Caco-2 (cell line): ENCODE measurements at regions of chr4 and their contacts with region 1.

Region 1: GRCh38 chr4:147096667-147097604 is 151.3 kb upstream of the TTC29 start:
- DNase-seq: peak in 1 of 2 experiments; percentile 15
- H3K4me3 ChIP-seq: no peak overlapping the region
- H3K4me3 Mint-ChIP-seq: no peak overlapping the region
- H3K27ac Mint-ChIP-seq: no peak overlapping the region
- H3K4me1 ChIP-seq: peaks cover 4% of the 10 kb centered on the region; the same call in 1 of the 2 replicates
- H3K4me1 Mint-ChIP-seq: no peaks in the 10 kb centered on the region
- H3K27me3 ChIP-seq: no peaks in the 10 kb centered on the region
- H3K27me3 Mint-ChIP-seq: peaks cover 3% of the 10 kb centered on the region
- CTCF ChIP-seq: peak; percentile 34 to 43

Region 2: DNA sequence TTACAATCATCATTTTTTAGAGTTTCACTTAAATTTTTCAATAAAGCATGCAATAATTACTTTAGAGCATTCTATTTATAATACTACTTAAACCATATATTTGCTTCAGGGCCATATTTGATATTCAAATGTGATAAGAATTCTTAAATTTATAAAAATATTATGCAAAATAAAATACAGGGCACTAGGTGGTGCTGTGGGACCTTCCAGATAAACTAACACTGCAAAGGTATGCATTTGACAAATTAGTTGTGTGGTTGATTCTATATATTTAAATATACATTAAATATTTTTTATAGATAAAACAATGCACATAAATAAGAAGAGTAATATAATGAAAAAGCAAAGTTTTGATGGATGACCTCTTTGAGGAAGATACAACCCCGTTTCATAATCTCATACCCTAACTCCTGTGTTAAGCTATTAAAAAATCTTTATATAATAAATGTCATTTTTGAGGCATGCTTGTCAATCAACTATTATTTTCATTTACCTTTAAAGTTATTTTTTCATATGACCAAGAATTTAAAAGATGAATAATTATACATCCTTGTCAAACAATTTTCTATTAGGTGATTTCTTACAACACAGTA is 754.2 kb before region 1 on chr4:
- CTCF ChIA-PET with region 1: no interaction called
- POLR2A ChIA-PET with region 1: no interaction called
- intact Hi-C with region 1: loop called (anchors 2 kb)
- DNase-seq: peak in 1 of 2 experiments; percentile 39
- H3K4me3 ChIP-seq: no peak overlapping the region
- H3K4me3 Mint-ChIP-seq: no peak overlapping the region
- H3K27ac Mint-ChIP-seq: no peak overlapping the region
- H3K4me1 ChIP-seq: no peaks in the 10 kb centered on the region
- H3K4me1 Mint-ChIP-seq: no peaks in the 10 kb centered on the region
- H3K27me3 ChIP-seq: no peaks in the 10 kb centered on the region
- H3K27me3 Mint-ChIP-seq: no peaks in the 10 kb centered on the region
- CTCF ChIP-seq: peak; percentile 37 to 45

Region 3: DNA sequence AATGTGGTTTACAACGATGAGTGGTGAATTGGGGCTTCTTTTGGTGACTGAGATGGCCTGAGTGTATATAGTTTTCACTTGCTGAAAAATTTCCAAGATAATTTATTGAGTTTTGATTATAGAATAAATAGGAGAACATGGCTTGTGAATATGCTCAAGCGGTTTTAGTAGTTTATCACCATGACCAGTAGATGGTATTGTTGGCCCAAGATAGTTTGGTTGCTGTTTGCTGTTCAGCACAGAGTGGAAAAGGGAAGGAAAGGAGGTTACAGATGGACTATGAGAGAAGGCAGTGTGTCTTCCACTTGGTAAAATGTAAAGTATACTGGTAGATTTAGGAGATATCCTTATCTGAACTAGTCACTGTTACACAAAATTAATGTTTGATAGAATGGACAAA is 514.1 kb before region 1 on chr4:
- CTCF ChIA-PET with region 1: no interaction called
- POLR2A ChIA-PET with region 1: no interaction called
- intact Hi-C with region 1: loop called (anchors 5 kb)
- DNase-seq: no peak
- H3K4me3 ChIP-seq: no peak overlapping the region
- H3K4me3 Mint-ChIP-seq: no peak overlapping the region
- H3K27ac Mint-ChIP-seq: no peak overlapping the region
- H3K4me1 ChIP-seq: no peaks in the 10 kb centered on the region
- H3K4me1 Mint-ChIP-seq: no peaks in the 10 kb centered on the region
- H3K27me3 ChIP-seq: no peaks in the 10 kb centered on the region
- H3K27me3 Mint-ChIP-seq: peaks cover 2% of the 10 kb centered on the region
- CTCF ChIP-seq: no peak

Region 4: DNA sequence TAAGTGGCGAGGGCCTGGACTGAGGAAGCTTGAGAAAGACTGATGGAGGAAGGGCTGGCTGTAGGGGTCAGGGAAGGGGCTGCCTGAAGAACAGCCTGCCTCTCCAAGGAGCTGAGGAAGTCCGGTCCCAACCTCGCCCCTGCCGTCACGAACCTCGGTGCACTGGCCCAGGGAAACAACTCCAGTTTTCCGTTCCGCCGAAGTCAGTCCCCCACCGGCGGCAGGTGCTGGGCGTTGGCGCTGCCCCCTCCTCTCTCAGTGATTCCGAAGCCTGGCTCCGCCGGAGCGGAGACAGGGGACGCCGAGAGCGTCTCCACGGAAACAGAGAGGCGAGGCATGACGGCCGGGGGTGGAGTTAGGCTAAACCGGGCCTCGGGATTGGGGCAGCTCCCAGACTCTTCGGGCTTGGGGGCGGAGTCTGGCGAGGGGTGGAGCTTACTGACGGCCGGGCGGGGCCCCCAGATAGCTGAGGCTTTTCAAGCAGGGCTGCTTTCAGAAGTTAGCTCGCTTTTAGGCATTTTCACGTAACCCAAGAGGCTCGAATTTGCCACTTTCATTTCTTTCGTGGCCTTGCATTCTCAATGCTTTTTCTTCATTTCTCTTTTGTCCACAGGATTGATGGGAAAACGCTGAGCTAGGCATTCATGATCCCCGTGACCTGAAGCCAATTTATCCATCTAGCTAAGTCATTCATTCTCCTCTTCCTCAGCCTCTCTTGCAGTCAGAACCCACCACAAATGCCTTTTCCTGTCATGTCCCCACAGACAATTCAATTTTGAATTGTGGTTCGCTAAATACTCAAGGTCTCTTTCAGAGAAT is 151.2 kb before region 1 on chr4 and contains the start of gene TTC29:
- CTCF ChIA-PET with region 1: no interaction called
- POLR2A ChIA-PET with region 1: no interaction called
- intact Hi-C with region 1: loop called (anchors 10 kb)
- DNase-seq: peak; percentile 82
- H3K4me3 ChIP-seq: peak within 1 kb of the TSS; percentile 25
- H3K4me3 Mint-ChIP-seq: peak within 1 kb of the TSS; percentile 61
- H3K27ac Mint-ChIP-seq: no peak within 1 kb of the TSS
- H3K4me1 ChIP-seq: no peaks in the 10 kb centered on the region
- H3K4me1 Mint-ChIP-seq: peaks cover 8% of the 10 kb centered on the region
- H3K27me3 ChIP-seq: no peaks in the 10 kb centered on the region
- H3K27me3 Mint-ChIP-seq: peaks cover 18% of the 10 kb centered on the region
- CTCF ChIP-seq: no peak
- total RNA-seq, gene TTC29: not detected in 2 replicates

Region 5: GRCh38 chr4:147019061-147019460 is 77.9 kb before region 1 on chr4:
- CTCF ChIA-PET with region 1: interaction called, 73 read pairs
- POLR2A ChIA-PET with region 1: no interaction called
- intact Hi-C with region 1: loop called (anchors 1 kb)
- DNase-seq: peak; percentile 70 to 74
- H3K4me3 ChIP-seq: no peak overlapping the region
- H3K4me3 Mint-ChIP-seq: no peak overlapping the region
- H3K27ac Mint-ChIP-seq: no peak overlapping the region
- H3K4me1 ChIP-seq: no peaks in the 10 kb centered on the region
- H3K4me1 Mint-ChIP-seq: no peaks in the 10 kb centered on the region
- H3K27me3 ChIP-seq: no peaks in the 10 kb centered on the region
- H3K27me3 Mint-ChIP-seq: peaks cover 21% of the 10 kb centered on the region
- CTCF ChIP-seq: peak; percentile 76 to 77

Region 6: GRCh38 chr4:147118528-147118927 is 21.6 kb after region 1 on chr4:
- CTCF ChIA-PET with region 1: no interaction called
- POLR2A ChIA-PET with region 1: no interaction called
- intact Hi-C with region 1: no loop called
- DNase-seq: no peak
- H3K4me3 ChIP-seq: no peak overlapping the region
- H3K4me3 Mint-ChIP-seq: no peak overlapping the region
- H3K27ac Mint-ChIP-seq: no peak overlapping the region
- H3K4me1 ChIP-seq: no peaks in the 10 kb centered on the region
- H3K4me1 Mint-ChIP-seq: no peaks in the 10 kb centered on the region
- H3K27me3 ChIP-seq: no peaks in the 10 kb centered on the region
- H3K27me3 Mint-ChIP-seq: no peaks in the 10 kb centered on the region
- CTCF ChIP-seq: no peak

Region 7: GRCh38 chr4:147220833-147221232 is 123.9 kb after region 1 on chr4:
- CTCF ChIA-PET with region 1: no interaction called
- POLR2A ChIA-PET with region 1: no interaction called
- intact Hi-C with region 1: no loop called
- DNase-seq: no peak
- H3K4me3 ChIP-seq: no peak overlapping the region
- H3K4me3 Mint-ChIP-seq: no peak overlapping the region
- H3K27ac Mint-ChIP-seq: no peak overlapping the region
- H3K4me1 ChIP-seq: no peaks in the 10 kb centered on the region
- H3K4me1 Mint-ChIP-seq: peaks cover 5% of the 10 kb centered on the region
- H3K27me3 ChIP-seq: no peaks in the 10 kb centered on the region
- H3K27me3 Mint-ChIP-seq: no peaks in the 10 kb centered on the region
- CTCF ChIP-seq: no peak

Region 8: DNA sequence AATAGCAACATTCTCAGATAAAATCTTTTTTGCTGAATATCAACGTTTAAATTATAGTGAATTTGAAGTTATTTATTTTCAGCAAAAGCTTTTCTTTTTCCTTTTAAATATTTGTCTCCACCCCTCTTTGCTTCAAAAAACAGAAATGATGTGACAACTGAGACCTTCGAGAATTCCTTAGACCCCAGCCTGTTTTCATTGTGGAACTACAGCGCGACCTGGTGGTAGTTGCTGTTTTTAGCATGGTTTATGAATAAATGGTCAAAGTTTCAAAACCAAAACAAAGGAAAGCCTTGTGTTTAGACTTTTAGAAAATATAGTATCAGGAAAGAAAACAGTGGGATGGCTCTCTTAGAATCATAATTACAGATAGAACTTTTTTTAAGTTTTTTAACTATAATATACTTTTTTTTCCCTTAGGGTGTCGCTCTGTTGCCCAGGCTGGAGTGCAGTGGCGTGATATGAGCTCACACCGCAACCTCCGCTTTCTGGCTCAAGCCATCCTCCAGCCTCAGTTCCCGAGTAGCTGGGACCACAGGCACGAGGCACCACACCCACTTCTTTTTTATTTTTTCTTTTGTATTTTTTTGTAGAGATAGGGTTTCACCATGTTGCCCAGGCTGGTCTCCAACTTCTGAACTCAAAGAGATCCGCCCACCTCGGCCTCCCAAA is 493.4 kb after region 1 on chr4:
- CTCF ChIA-PET with region 1: no interaction called
- POLR2A ChIA-PET with region 1: no interaction called
- intact Hi-C with region 1: loop called (anchors 5 kb)
- DNase-seq: peak; percentile 40 to 65
- H3K4me3 ChIP-seq: no peak overlapping the region
- H3K4me3 Mint-ChIP-seq: no peak overlapping the region
- H3K27ac Mint-ChIP-seq: no peak overlapping the region
- H3K4me1 ChIP-seq: no peaks in the 10 kb centered on the region
- H3K4me1 Mint-ChIP-seq: no peaks in the 10 kb centered on the region
- H3K27me3 ChIP-seq: no peaks in the 10 kb centered on the region
- H3K27me3 Mint-ChIP-seq: no peaks in the 10 kb centered on the region
- CTCF ChIP-seq: peak; percentile 72 to 74

Region 9: GRCh38 chr4:148311526-148311925 is 1214.6 kb after region 1 on chr4:
- CTCF ChIA-PET with region 1: no interaction called
- POLR2A ChIA-PET with region 1: no interaction called
- intact Hi-C with region 1: no loop called
- DNase-seq: no peak
- H3K4me3 ChIP-seq: no peak overlapping the region
- H3K4me3 Mint-ChIP-seq: no peak overlapping the region
- H3K27ac Mint-ChIP-seq: no peak overlapping the region
- H3K4me1 ChIP-seq: no peaks in the 10 kb centered on the region
- H3K4me1 Mint-ChIP-seq: no peaks in the 10 kb centered on the region
- H3K27me3 ChIP-seq: no peaks in the 10 kb centered on the region
- H3K27me3 Mint-ChIP-seq: no peaks in the 10 kb centered on the region
- CTCF ChIP-seq: no peak